B cell (primary cell): ENCODE measurements at regions of chr17 and their contacts with region 1.

Region 1: GRCh38 chr17:9924735-9925191 is 19.7 kb upstream of the RCVRN start:
- DNase-seq: peak; percentile 75
- ATAC-seq: peak; percentile 79
- H3K4me3 ChIP-seq: no peak overlapping the region
- H3K4me3 Mint-ChIP-seq: no peak overlapping the region
- H3K27ac ChIP-seq: no peak overlapping the region
- H3K27ac Mint-ChIP-seq: no peak overlapping the region
- H3K4me1 ChIP-seq: no peaks in the 10 kb centered on the region
- H3K4me1 Mint-ChIP-seq: peaks cover 3% of the 10 kb centered on the region
- H3K27me3 ChIP-seq: no peaks in the 10 kb centered on the region
- H3K27me3 Mint-ChIP-seq: no peaks in the 10 kb centered on the region
- CTCF ChIP-seq: peak; percentile 95

Region 2: DNA sequence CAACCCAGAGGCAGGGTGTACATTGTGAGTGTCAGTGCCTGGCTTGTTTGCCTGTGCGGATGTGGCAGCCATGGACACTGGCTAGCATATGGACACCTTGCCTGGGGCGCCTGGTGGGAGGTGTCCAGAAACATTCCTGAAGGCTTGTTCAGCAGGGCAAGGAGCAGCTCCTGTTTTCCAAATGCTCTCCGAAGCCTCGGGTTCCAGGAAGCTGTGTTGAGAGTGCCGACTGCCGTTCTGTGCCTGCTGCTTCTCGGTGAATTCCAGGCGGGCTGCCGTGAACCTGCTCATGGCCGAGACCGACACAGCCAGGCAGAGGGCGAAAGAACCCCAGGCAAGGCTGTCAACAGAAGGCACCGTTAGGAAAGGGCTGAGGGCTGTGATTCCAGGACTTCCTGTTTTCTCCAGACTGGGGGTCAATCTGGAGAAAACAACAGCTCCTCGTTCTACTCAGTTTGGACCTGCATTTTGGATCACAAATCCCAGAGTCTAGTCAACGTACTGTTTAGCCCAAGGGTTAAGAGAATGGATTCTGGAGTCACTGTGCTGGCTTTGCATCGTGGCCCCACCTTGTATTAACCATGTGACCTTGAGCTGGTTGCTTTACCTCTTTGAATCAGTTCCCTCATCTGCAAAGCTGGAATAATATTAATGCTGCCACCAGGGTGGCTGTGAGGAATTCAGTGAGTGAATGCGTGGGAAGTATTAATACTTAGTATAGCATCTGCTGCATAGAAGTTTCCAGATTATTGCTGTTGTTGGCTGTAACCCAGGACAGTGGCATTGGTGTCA is 122.3 kb before region 1 on chr17:
- CTCF ChIA-PET with region 1: no interaction called
- POLR2A ChIA-PET with region 1: no interaction called
- intact Hi-C with region 1: no loop called
- DNase-seq: no peak
- ATAC-seq: no peak
- H3K4me3 ChIP-seq: no peak overlapping the region
- H3K4me3 Mint-ChIP-seq: no peak overlapping the region
- H3K27ac ChIP-seq: no peak overlapping the region
- H3K27ac Mint-ChIP-seq: no peak overlapping the region
- H3K4me1 ChIP-seq: no peaks in the 10 kb centered on the region
- H3K4me1 Mint-ChIP-seq: no peaks in the 10 kb centered on the region
- H3K27me3 ChIP-seq: peaks cover 0 to 4% (median 0%) of the 10 kb centered on the region in 4 experiments
- H3K27me3 Mint-ChIP-seq: peaks cover 15% of the 10 kb centered on the region
- CTCF ChIP-seq: no peak

Region 3: GRCh38 chr17:9935408-9935807 is 10.6 kb after region 1 on chr17:
- CTCF ChIA-PET with region 1: interaction called, 12 read pairs
- POLR2A ChIA-PET with region 1: no interaction called
- intact Hi-C with region 1: no loop called
- DNase-seq: no peak
- ATAC-seq: no peak
- H3K4me3 ChIP-seq: no peak overlapping the region
- H3K4me3 Mint-ChIP-seq: no peak overlapping the region
- H3K27ac ChIP-seq: no peak overlapping the region
- H3K27ac Mint-ChIP-seq: no peak overlapping the region
- H3K4me1 ChIP-seq: no peaks in the 10 kb centered on the region
- H3K4me1 Mint-ChIP-seq: no peaks in the 10 kb centered on the region
- H3K27me3 ChIP-seq: no peaks in the 10 kb centered on the region
- H3K27me3 Mint-ChIP-seq: no peaks in the 10 kb centered on the region
- CTCF ChIP-seq: no peak

Region 4: DNA sequence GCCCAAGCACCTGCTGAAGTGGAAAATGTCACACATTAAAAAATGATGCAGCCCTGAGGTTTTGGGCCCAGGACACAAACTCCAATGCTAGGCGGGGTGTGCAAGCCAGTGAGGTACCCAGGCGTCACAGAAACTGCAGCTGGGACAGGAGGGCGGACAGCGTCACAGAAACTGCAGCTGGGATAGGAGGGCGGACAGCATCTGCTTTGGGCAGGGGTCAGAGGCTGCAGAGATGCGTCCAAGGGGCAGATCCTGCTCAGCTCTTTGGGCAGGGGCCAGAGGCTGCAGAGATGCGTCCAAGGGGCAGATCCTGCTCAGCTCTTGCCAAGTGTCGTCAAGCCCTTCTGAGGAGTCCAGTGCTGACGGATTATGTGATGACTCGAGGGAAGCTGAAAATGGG is 24.2 kb after region 1 on chr17:
- CTCF ChIA-PET with region 1: no interaction called
- POLR2A ChIA-PET with region 1: no interaction called
- intact Hi-C with region 1: no loop called
- DNase-seq: no peak
- ATAC-seq: no peak
- H3K4me3 ChIP-seq: no peak overlapping the region
- H3K4me3 Mint-ChIP-seq: no peak overlapping the region
- H3K27ac ChIP-seq: no peak overlapping the region
- H3K27ac Mint-ChIP-seq: no peak overlapping the region
- H3K4me1 ChIP-seq: no peaks in the 10 kb centered on the region
- H3K4me1 Mint-ChIP-seq: no peaks in the 10 kb centered on the region
- H3K27me3 ChIP-seq: no peaks in the 10 kb centered on the region
- H3K27me3 Mint-ChIP-seq: no peaks in the 10 kb centered on the region
- CTCF ChIP-seq: no peak